Left ventricle myocardium inferior (tissue), 1 donor: ENCODE measurements at regions of chr13 and their contacts with region 1.

Region 1: DNA sequence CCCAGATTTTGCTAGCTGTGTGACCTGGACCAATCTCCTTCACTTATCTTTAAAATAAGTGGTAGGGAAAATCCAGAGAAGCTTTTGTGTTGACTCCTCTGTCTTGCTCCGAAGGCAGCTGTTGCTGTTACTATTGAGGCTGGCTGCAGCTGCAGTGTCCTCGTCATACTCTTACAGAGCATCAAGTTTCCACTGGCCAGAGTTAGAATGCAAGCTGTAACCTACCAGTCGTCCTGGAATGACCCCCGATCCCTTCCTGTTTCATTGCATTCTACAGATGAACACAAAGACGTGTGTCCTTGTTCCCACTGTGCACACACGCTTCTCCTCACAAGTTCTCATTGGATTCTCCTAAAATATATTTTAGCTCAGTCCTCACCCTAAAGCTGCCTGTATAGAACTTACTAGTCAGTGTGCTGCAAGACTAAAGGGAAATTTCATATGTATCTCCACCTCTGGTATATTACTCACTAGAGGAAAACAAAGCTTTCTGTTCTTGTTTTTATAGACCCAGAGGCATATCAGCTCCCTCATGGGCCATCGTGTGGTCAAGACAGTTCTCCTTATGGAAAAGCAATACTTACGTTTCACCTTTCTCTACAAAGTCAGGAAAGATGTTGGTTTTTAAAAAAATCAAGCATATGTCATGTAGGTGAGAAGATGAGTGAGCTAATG is 589.8 kb downstream of the LMO7 start:
- DNase-seq: peak; percentile 33
- H3K4me3 ChIP-seq: no peak overlapping the region
- H3K27ac ChIP-seq: no peak overlapping the region
- H3K4me1 ChIP-seq: peaks cover 18% of the 10 kb centered on the region
- H3K27me3 ChIP-seq: no peaks in the 10 kb centered on the region
- CTCF ChIP-seq: no peak

Region 2: GRCh38 chr13:76266561-76266960 is 40.6 kb after region 1 on chr13:
- intact Hi-C with region 1: no loop called
- DNase-seq: no peak
- H3K4me3 ChIP-seq: no peak overlapping the region
- H3K27ac ChIP-seq: no peak overlapping the region
- H3K4me1 ChIP-seq: no peaks in the 10 kb centered on the region
- H3K27me3 ChIP-seq: no peaks in the 10 kb centered on the region
- CTCF ChIP-seq: no peak

Region 3: DNA sequence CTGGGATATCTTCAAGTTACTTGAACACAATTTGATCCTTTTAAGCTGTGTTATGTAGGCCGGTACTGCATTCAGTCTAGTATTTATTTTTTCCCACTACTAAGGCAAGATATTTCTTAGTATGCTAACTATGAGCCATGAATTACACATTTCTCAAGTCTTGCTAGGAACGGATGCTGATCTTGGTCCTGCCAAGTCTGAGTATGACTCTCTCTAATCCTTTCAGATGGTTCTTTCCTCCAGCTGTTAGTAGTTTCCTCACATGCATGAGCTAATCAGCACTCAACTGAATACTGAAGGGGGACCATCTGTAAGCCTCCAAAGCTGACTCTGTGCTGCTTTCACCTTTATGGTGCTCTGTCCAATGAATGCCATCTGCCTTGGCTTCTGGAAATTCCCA is 200.0 kb after region 1 on chr13:
- intact Hi-C with region 1: no loop called
- DNase-seq: no peak
- H3K4me3 ChIP-seq: no peak overlapping the region
- H3K27ac ChIP-seq: no peak overlapping the region
- H3K4me1 ChIP-seq: peaks cover 7% of the 10 kb centered on the region
- H3K27me3 ChIP-seq: no peaks in the 10 kb centered on the region
- CTCF ChIP-seq: no peak

Region 4: DNA sequence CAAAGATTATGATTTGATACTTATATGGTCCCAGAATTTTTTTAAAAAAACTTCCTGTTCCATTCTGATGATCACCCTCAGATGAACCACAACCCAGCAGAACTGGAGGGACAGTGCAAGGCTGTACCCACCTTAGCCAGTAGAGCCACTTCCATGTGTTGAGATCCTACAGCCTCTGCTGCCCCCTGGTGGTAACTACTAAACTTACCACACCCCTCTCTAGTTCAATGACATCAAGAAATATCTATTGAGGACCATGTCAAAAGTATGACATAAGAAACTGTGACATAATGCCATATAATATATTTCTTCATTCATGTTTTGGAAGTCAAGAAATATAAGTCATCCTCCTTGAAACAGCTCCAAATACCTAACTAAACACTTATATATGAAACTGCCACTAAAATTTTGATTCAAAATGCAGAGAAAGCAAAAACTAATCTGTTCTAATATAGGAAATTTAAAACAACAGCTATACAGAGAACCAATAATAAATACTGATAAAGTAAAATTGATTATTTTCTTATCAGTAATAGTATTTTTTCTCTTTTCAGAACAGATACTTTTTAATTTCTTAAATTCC is 247.7 kb after region 1 on chr13:
- intact Hi-C with region 1: loop called (anchors 10 kb)
- DNase-seq: peak; percentile 45
- H3K4me3 ChIP-seq: no peak overlapping the region
- H3K27ac ChIP-seq: peak overlapping the region; percentile 44
- H3K4me1 ChIP-seq: peaks cover 11% of the 10 kb centered on the region
- H3K27me3 ChIP-seq: no peaks in the 10 kb centered on the region
- CTCF ChIP-seq: peak; percentile 88